ENCODE measurements at regions of chr19 and their contacts with region 1.

Region 1: DNA sequence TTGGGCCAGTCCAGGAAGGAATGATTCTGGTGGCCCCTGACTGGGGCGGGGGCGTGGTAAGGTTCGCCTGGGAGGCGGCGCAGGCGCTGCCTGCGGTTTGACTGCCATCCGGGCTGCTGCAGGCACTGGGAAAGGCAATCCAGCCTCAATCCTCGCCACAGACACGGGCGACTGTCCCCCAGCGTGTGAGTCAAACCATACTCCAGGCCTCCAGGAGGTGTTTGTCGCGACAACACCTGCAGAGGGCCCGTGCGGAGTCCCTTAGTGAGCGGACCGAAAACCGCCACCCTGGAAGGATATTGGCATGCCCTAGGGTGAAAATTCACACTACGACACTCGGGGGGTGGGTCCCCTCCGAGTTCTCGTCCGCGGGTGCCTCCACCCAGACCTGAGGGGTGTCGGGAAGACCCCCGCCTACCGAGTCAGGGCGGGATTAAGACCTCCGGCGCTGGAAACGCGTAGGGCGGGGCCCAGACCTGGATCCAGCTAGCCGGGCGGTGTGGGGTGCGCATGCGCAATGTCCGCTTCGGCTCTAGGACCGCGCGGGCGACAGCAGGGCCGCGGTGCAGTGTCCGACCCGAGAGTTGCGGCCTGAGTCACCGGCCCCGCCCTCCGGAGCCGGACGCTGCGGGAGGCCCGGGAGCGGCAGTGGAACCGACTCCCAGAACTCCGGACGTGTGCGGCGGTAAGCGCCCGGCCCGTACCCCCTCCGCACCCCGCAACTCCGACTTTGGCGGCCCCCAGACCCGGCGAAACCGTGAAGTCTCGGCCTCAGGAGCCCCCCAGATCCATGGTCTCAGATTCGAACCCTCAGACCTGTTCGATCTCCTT is at the start of gene CAPNS1:
- DNase-seq: peak; percentile 99
- ATAC-seq: peak; percentile 97
- H3K4me3 ChIP-seq: peak within 1 kb of the TSS; percentile 76 to 91
- H3K27ac ChIP-seq: peak within 1 kb of the TSS; percentile 30 to 97
- H3K4me1 ChIP-seq: no peaks in the 10 kb centered on the region
- H3K27me3 ChIP-seq: no peaks in the 10 kb centered on the region
- total RNA-seq, gene CAPNS1: 521 to 538 TPM

Region 2: GRCh38 chr19:35740423-35741202 is 399.1 kb before region 1 on chr19:
- intact Hi-C with region 1: loop called in 1 of 2 experiments (anchors 10 kb)
- DNase-seq: peak; percentile 99
- ATAC-seq: peak; percentile 93
- H3K4me3 ChIP-seq: peak overlapping the region; percentile 32 to 59
- H3K27ac ChIP-seq: peak overlapping the region in 1 of 2 donors; percentile 79
- H3K4me1 ChIP-seq: no peaks in the 10 kb centered on the region
- H3K27me3 ChIP-seq: no peaks in the 10 kb centered on the region